CD4-positive, alpha-beta memory T cell (primary cell): ENCODE measurements at regions of chr19 and their contacts with region 1.

Region 1: DNA sequence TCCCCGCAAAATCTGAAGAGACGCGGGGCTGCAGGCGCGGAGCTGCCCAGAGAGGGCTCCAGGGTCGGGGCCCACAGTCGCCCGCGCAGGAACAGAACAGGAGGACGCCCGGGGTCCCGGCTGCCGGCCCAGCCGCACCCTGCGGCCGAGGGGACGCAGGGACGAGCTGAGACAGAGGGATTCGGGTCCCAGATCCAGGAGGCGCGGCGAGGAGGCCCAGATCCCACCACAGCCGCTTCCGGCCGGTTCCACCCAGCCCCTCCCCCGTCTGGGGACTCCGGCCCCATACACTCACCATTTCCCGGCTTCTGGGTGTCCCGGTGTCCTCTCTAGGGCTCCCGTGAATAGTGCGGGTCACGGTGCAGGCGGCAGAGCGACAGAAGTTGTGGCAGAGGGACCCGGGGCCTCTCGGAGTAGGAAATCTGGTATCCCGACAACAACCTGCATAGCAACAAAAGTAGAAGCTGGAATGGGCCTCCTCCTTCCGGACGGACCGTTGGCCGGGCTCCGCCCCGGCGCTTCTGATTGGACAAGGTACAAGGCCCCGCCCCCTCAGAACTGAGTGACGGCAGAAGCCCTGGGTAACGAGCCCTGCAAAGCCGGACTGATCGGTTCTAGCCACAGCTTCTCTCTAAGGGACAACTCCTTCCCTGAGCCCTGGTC is at the start of gene ZNF20:
- DNase-seq: peak; percentile 76 to 86 (median 80)
- H3K4me3 ChIP-seq: peak within 1 kb of the TSS; percentile 66 to 86
- H3K4me3 Mint-ChIP-seq: peak within 1 kb of the TSS; percentile 81 to 95 (median 91)
- H3K27ac ChIP-seq: peak within 1 kb of the TSS; percentile 63
- H3K27ac Mint-ChIP-seq: peak within 1 kb of the TSS; percentile 58 to 93 (median 79)
- H3K4me1 ChIP-seq: peaks cover 26% of the 10 kb centered on the region
- H3K4me1 Mint-ChIP-seq: peaks cover 28 to 43% (median 33%) of the 10 kb centered on the region in 4 donors
- H3K27me3 ChIP-seq: no peaks in the 10 kb centered on the region
- H3K27me3 Mint-ChIP-seq: no peaks in the 10 kb centered on the region
- total RNA-seq, gene ZNF20: 4.0 to 7.4 TPM

Region 2: GRCh38 chr19:11924886-11925650 is 214.9 kb before region 1 on chr19 and contains the start of gene ZNF700:
- CTCF ChIA-PET with region 1: interaction called, 44 read pairs
- POLR2A ChIA-PET with region 1: interaction called, 24 read pairs
- intact Hi-C with region 1: loop called (anchors 1 kb)
- DNase-seq: peak; percentile 86 to 95 (median 89)
- H3K4me3 ChIP-seq: peak within 1 kb of the TSS; percentile 99
- H3K4me3 Mint-ChIP-seq: peak within 1 kb of the TSS; percentile 93 to 98 (median 96)
- H3K27ac ChIP-seq: peak within 1 kb of the TSS; percentile 87
- H3K27ac Mint-ChIP-seq: peak within 1 kb of the TSS; percentile 92 to 98 (median 96)
- H3K4me1 ChIP-seq: peaks cover 31% of the 10 kb centered on the region
- H3K4me1 Mint-ChIP-seq: peaks cover 26 to 58% (median 40%) of the 10 kb centered on the region in 4 donors
- H3K27me3 ChIP-seq: no peaks in the 10 kb centered on the region
- H3K27me3 Mint-ChIP-seq: no peaks in the 10 kb centered on the region
- total RNA-seq, gene ZNF700: 24.9 to 25.6 TPM

Region 3: GRCh38 chr19:11987405-11988281 is 152.4 kb before region 1 on chr19:
- CTCF ChIA-PET with region 1: interaction called, 4 read pairs
- POLR2A ChIA-PET with region 1: interaction called, 5 read pairs
- intact Hi-C with region 1: loop called (anchors 1 kb)
- DNase-seq: peak; percentile 83 to 92 (median 85)
- H3K4me3 ChIP-seq: peak overlapping the region; percentile 66 to 67
- H3K4me3 Mint-ChIP-seq: peak overlapping the region; percentile 91 to 99 (median 98)
- H3K27ac ChIP-seq: peak overlapping the region; percentile 73
- H3K27ac Mint-ChIP-seq: peak overlapping the region; percentile 95 to 99 (median 97)
- H3K4me1 ChIP-seq: peaks cover 7% of the 10 kb centered on the region
- H3K4me1 Mint-ChIP-seq: peaks cover 15 to 29% (median 18%) of the 10 kb centered on the region in 4 donors
- H3K27me3 ChIP-seq: no peaks in the 10 kb centered on the region
- H3K27me3 Mint-ChIP-seq: no peaks in the 10 kb centered on the region

Region 4: DNA sequence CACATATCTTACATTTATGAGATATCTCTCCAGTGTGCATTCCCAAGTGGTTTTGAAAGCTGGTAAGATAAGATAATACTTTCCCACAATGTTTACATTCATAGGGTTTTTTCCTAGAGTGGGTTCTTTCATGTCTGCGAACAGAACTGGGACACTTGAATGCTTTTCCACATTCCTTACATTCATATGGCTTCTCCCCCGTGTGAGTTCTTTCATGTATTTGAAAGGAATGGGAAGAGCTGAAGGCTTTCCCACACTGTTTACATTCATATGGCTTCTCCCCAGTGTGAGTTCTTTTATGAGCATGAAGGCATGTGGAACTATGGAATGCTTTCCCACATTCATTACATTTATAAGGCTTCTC is 124.3 kb before region 1 on chr19:
- CTCF ChIA-PET with region 1: no interaction called
- POLR2A ChIA-PET with region 1: no interaction called
- intact Hi-C with region 1: no loop called
- DNase-seq: no peak
- H3K4me3 ChIP-seq: no peak overlapping the region
- H3K4me3 Mint-ChIP-seq: no peak overlapping the region
- H3K27ac ChIP-seq: no peak overlapping the region
- H3K27ac Mint-ChIP-seq: no peak overlapping the region
- H3K4me1 ChIP-seq: no peaks in the 10 kb centered on the region
- H3K4me1 Mint-ChIP-seq: peaks cover 0 to 1% (median 0%) of the 10 kb centered on the region in 4 donors
- H3K27me3 ChIP-seq: no peaks in the 10 kb centered on the region
- H3K27me3 Mint-ChIP-seq: no peaks in the 10 kb centered on the region

Region 5: DNA sequence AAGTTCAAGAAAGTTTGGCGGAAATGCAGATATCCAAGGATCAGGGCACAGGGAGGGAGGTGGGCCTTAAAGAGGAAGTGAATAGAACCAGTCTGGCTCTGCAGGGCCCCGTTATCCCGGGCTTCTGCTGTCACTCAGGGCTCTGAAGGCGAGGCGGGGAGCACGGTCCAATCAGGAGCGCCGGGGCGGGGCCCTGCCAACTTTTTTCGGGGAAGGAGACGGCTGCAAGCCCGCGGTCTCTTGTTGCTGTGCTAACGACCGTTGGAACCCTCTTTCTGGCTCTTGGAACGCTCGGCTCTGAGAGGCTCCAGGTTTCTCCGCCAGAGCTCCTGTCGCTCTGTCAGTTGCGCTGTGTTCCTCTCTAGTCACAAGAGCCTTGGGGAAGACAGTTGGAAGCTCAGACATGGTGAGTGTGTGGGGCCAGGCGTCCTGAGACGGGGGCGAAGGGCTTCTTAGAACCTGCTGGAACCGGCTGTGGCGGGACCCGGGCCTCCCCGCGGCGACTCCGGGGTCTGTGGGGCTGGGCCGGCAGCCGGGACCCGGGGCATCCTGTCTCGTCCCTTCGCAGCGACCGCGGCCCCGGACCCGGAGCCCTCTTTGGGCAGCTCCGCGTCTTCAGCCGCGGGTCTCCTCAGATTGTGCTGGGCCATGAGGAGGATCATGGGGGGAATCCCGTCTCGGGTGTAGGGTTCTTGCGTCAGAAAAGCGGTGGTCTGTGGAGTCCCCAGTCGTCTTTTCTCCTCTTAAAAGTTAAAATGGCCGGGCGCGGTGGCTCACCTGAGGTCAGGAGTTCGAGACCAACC is 47.8 kb before region 1 on chr19:
- CTCF ChIA-PET with region 1: interaction called, 29 read pairs
- POLR2A ChIA-PET with region 1: interaction called, 5 read pairs
- intact Hi-C with region 1: loop called (anchors 1 kb)
- DNase-seq: peak in 4 of 5 donors; percentile 2 to 23 (median 12)
- H3K4me3 ChIP-seq: peak overlapping the region in 1 of 2 donors; percentile 46
- H3K4me3 Mint-ChIP-seq: peak overlapping the region; percentile 77 to 87 (median 81)
- H3K27ac ChIP-seq: no peak overlapping the region
- H3K27ac Mint-ChIP-seq: peak overlapping the region in 4 of 7 donors; percentile 15 to 70 (median 32)
- H3K4me1 ChIP-seq: peaks cover 6% of the 10 kb centered on the region
- H3K4me1 Mint-ChIP-seq: peaks cover 2 to 16% (median 11%) of the 10 kb centered on the region in 4 donors
- H3K27me3 ChIP-seq: no peaks in the 10 kb centered on the region
- H3K27me3 Mint-ChIP-seq: peaks cover 10 to 19% of the 10 kb centered on the region in 2 donors

Region 6: DNA sequence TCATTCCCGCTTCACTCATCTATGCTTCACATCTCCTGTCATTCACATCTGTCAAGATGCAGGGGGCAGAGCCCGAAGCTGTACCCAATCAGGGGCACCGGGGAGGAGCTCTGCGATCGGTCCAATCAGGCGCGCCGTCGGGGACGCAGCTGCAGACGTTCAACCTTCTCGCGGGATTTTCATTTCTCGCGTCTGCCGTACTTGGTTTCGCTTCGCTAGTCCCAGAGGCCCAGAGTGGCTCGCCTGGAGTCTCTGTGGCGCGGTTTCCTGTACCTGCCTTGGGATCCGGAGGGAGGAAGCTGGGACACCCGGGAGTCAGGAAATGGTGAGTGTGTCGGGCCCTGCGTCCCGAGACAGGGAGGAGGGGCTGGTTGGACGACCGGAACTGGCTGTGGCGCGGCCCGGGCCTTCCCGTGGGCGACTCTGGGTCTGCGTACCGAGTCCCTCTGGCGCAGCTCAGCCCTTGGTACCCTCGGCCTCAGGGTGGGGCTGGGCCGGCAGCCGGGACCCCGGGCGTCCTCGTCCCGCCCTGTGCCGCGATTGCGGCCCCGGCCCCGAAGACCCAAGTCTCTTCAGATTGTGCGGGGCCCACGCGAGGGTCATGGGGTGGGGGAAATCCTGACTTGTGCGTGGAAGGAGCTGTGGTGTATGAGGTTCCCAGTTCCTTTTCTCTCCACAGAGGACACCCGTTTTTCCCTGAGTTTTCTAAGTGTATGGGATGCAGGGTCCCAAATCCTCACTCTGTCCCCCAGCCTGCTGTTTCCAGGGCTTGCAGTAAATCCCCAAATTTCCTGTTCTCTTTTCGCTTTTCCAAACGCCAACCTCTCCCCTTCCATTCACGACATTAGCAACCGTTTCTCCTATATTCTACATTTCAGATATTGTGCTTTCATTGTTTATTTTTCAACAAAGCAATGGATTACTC is 23.1 kb after region 1 on chr19 and contains the start of gene ZNF136:
- CTCF ChIA-PET with region 1: interaction called, 19 read pairs
- POLR2A ChIA-PET with region 1: interaction called, 17 read pairs
- intact Hi-C with region 1: loop called (anchors 1 kb)
- DNase-seq: peak; percentile 90 to 96 (median 92)
- H3K4me3 ChIP-seq: peak within 1 kb of the TSS; percentile 65 to 74
- H3K4me3 Mint-ChIP-seq: peak within 1 kb of the TSS; percentile 95 to 99 (median 98)
- H3K27ac ChIP-seq: peak within 1 kb of the TSS; percentile 98
- H3K27ac Mint-ChIP-seq: peak within 1 kb of the TSS; percentile 92 to 99 (median 99)
- H3K4me1 ChIP-seq: peaks cover 36% of the 10 kb centered on the region
- H3K4me1 Mint-ChIP-seq: peaks cover 32 to 56% (median 40%) of the 10 kb centered on the region in 4 donors
- H3K27me3 ChIP-seq: no peaks in the 10 kb centered on the region
- H3K27me3 Mint-ChIP-seq: no peaks in the 10 kb centered on the region
- total RNA-seq, gene ZNF136: 26.9 to 32.8 TPM

Region 7: DNA sequence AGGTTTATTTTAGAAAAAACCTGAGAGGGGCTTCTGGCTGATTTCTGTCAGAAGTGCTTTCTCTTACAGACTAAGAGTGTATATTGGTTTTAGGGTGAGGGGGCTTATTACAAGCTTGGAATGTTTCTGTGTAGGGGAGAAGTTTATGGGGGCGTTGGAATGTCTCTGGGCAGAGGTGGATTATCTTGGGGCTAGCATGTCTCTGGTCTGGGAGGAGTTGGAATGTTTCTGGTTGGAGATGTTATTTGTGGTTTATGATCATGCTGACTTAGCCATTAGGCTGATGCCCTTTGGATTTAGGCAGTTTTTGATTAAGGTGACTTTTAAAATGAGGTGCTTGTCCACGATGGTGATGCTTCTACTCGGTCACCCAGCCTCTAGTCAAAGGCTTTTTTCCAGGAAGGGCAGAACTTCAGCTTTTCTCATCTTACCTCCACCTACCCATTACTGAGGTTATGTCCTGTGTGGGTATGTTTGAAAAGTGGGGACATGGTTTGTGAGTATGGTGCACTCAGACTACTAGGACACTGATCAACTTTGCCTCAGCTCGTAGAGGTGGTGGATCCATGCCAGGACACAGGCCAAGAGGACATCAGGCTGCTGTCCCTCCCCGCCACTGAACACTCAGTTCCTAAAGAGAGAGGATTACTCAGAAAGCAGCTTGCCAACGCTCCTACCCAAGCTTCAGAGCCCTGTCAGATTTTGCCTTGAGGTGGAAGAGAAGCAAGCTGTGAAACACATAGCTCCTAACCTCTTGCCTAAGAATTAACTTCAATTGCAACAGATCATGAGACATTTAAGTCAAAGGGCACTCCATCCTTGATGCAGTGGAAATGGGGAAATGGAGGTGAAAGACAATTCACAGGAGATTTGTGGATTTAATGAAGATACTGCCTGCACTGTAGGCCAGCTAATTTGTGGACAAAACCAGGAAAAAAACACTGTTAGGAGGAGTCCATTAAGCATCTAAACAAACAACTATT is 91.0 kb after region 1 on chr19:
- CTCF ChIA-PET with region 1: no interaction called
- POLR2A ChIA-PET with region 1: no interaction called
- intact Hi-C with region 1: no loop called
- DNase-seq: no peak
- H3K4me3 ChIP-seq: no peak overlapping the region
- H3K4me3 Mint-ChIP-seq: no peak overlapping the region
- H3K27ac ChIP-seq: no peak overlapping the region
- H3K27ac Mint-ChIP-seq: peak overlapping the region in 1 of 7 donors; percentile 62
- H3K4me1 ChIP-seq: no peaks in the 10 kb centered on the region
- H3K4me1 Mint-ChIP-seq: peaks cover 0 to 5% (median 0%) of the 10 kb centered on the region in 4 donors
- H3K27me3 ChIP-seq: no peaks in the 10 kb centered on the region
- H3K27me3 Mint-ChIP-seq: no peaks in the 10 kb centered on the region